ENCODE measurements at regions of chr1 and their contacts with region 1.

Region 1: DNA sequence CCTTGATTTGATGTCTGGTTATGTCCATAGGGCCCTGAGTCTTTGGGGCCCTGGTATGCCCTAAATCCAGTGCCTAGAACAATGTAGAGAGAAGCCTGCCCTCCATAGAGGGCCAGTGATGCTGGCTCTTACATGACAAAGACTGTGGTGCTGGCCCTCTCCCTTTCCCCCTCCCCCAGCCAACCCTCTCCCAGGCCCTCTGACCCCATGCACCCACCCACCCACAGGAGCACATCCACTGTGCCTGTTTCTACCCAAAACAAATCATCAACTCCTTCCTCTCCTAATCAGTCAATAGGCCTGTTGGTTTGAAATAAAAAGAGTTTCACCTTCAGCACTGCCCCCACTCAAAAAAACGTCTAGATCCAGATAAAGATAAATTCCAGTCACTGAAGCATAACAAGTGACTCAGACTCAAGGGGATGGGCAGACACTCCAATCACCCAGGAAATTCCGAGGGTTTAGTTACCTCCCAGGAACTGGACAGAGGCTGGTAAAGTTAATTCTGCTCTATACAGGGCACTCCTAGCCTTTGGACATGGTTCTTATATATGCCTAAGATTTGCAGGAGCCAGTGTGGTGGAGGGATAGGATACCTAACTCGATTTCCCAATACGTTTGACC is 144.8 kb upstream of the VANGL1 start:
- DNase-seq: no peak
- ATAC-seq: no peak

Region 2: DNA sequence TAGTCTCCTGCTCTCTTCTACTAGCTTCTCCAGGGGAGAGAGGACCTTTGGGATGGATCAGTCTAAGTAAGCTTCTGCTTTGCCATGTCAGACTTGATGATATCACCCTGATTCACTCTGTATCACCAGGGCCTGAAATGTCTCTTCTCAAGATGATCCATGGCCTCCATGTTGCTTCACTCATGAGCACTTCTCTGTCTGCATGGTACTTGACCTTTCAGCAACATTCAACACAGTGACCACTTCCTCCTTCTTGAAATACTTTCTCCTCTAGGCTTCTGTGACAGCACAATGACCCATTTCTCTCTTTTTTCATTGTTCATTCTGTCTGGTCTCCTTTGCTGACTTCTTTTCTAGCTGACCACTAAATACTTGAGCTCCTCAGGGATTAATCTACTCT is 123.7 kb before region 1 on chr1:
- intact Hi-C with region 1: no loop called
- DNase-seq: no peak
- ATAC-seq: no peak

Region 3: GRCh38 chr1:115430441-115431116 is 66.4 kb before region 1 on chr1:
- intact Hi-C with region 1: loop called in 1 of 2 experiments (anchors 10 kb)
- DNase-seq: peak; percentile 30
- ATAC-seq: peak in 1 of 2 donors; percentile 48

Region 4: GRCh38 chr1:115476616-115477015 is 20.4 kb before region 1 on chr1:
- intact Hi-C with region 1: no loop called
- DNase-seq: no peak
- ATAC-seq: no peak

Region 5: DNA sequence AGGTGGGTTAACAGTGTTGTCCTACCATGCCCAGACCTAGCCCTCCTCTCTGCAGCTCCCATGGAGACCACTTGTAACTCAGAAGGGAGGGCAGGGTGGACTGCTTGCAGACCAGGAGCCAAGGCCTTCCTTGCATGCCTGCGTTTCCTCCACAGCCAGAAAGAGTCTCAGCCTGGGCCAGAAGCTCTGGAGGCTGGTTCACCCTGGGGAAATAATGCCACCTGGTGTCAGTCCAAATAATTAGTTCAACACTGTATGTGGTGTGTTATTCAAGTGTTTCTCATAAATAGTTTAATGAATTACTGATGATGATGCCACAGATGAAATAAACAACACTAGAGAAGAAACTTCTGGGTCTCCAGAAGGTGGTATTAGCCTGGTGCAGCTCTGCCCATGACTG is 127.8 kb after region 1 on chr1:
- intact Hi-C with region 1: no loop called
- DNase-seq: no peak
- ATAC-seq: no peak

Region 6: DNA sequence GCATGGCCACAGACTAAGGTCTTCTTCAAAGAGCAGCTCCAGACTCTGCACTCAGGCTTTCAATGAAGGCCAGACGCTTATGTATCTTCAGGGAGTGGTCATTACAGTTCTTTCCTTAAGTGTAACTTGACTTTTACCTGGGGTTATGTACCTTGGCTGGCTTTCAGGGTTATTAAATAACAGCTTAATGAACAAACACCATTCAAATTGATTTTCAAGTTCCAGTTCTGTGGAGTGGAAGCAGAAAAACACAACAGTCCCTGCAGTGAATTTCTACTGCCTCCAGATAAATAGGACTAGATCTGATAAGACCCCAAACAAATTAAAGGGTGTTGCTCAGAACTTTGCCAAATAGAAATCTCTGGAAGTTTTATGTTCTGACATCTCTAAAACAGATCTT is 455.6 kb after region 1 on chr1:
- intact Hi-C with region 1: no loop called
- DNase-seq: no peak
- ATAC-seq: no peak

Measured in left cardiac atrium (tissue), 4 donors.